Activated CD4-positive, alpha-beta T cell treated with anti-CD3 and anti-CD28 coated beads, Interleukin-2, amount 10 ng/mL, durations not matched to agents 24 days and 14 days (primary cell): ENCODE measurements at regions of chr2 and their contacts with region 1.

Region 1: DNA sequence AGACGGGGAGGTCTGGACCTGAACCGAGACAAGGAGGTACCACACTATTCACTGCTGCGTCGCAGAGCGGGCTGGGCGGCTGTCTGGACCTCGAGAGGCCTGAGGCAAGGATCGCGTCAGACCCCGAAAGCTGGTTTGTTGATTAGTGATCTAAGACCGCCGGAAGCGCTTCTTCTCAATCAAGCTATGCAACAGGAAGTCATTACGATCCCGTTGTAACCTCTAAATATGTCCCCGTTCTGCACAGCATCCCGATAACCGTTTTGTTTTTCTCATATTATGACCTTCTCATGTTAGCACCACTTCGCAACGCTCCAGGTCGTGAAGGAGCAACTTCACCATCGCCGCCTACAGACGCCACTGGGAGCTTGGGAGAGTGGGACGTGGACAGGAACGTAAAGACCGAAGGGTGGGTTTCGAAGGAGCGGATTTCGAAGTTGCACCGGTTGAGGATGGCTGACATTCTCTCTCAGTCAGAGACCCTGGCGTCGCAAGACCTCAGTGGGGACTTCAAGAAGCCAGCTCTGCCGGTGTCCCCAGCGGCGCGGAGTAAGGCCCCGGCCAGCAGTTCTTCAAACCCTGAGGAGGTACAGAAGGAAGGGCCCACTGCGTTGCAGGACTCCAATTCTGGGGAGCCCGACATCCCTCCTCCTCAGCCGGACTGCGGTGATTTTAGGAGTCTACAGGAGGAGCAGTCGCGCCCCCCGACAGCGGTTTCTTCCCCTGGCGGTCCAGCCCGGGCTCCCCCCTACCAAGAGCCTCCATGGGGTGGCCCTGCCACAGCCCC is at the starts of genes SLC4A1AP and SUPT7L:
- DNase-seq: peak; percentile 93
- H3K4me3 Mint-ChIP-seq: peak within 1 kb of the TSS; percentile 98
- H3K27ac Mint-ChIP-seq: peak within 1 kb of the TSS; percentile 99
- H3K4me1 Mint-ChIP-seq: peaks cover 38% of the 10 kb centered on the region
- H3K27me3 Mint-ChIP-seq: no peaks in the 10 kb centered on the region
- total RNA-seq, gene SLC4A1AP: 27.1 and 28.7 TPM in 2 replicates
- total RNA-seq, gene SUPT7L: 33.3 and 34.5 TPM in 2 replicates

Region 2: DNA sequence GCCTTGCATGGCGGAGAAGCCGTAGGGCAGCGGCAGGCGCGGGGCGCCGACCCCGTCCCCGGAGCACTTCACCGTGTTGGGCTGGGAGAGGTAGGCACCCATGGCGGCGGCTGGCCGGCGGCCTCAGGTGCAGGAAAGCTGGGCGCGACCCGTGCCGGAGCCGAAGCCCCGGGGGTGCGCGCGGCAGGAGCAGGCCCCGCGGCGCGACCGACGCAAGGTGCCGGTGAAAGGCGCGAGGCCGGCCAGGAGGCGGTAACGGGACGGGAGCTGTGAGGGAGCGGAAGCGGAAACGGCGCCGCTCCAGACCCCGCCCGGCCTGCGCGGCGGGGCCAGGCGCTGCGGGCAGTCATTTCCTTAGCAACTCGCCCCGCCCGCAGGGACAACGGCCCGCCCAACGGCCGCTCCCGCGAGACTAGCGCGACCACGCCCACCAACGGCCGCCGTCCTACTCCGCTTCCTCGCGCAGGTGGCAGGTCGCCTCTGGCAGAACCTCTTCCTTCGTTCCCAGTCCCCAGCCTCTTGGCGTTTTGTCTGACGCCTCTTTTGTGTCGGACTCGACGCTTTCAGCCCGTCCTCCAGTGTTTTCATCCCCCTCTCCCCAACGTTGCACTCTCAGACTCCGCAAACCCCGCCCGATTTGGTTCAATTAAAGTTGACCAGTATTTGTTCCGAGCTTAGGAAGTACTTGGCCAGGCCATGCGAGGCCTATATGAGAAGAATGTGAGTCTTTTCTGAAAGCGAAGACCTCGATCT is 254.2 kb before region 1 on chr2 and contains the start of gene PPM1G:
- intact Hi-C with region 1: loop called (anchors 10 kb)
- DNase-seq: peak; percentile 99
- H3K4me3 Mint-ChIP-seq: peak within 1 kb of the TSS; percentile 98
- H3K27ac Mint-ChIP-seq: peak within 1 kb of the TSS; percentile 89
- H3K4me1 Mint-ChIP-seq: peaks cover 30% of the 10 kb centered on the region
- H3K27me3 Mint-ChIP-seq: peaks cover 5% of the 10 kb centered on the region
- total RNA-seq, gene PPM1G: 165 and 167 TPM in 2 replicates

Region 3: DNA sequence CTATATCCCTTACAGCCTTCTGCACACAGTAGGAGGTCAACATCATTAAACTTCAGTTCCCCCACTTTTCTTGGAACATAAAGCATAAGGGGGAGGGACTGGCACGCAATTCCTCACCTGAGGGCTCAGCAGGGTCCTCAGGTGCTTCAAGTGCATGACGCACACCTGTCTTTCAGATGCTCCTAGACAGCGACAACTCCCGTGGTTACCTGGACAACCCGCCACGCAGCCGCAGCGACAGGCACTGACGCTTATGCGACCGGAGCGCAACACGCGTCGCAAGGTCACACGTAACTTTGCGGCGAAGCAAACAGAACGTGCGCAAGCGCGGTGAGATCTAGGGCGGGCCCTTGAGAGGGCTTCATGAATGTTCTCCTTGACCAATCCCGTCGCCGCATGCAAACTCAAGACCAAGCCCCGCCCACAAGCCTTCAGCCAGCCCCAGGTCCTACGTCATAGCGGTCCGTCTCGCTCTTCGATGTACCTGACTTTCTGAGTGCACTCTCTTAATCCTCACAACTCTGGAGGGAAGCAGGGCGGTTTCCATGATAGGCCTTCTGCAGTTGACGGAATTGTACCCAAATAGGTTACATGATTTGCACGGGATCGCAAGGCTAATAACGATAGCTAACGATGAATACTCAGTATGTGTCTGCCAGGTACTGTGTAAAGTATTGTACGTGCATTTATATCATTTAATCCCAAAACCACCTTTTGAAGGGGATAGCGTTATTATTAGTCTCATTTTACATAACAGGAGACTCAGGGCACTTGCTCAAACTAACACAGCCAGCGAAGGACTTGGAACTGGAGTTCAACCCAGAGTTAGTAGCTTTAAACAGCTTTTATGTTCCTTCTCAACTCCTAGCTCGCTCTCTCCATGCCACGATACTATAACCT is 173.9 kb before region 1 on chr2 and contains the start of gene IFT172:
- intact Hi-C with region 1: loop called (anchors 10 kb)
- DNase-seq: peak; percentile 100
- H3K4me3 Mint-ChIP-seq: peak within 1 kb of the TSS; percentile 84
- H3K27ac Mint-ChIP-seq: peak within 1 kb of the TSS; percentile 87
- H3K4me1 Mint-ChIP-seq: peaks cover 20% of the 10 kb centered on the region
- H3K27me3 Mint-ChIP-seq: peaks cover 18% of the 10 kb centered on the region
- total RNA-seq, gene IFT172: 12.4 and 12.9 TPM in 2 replicates

Region 4: DNA sequence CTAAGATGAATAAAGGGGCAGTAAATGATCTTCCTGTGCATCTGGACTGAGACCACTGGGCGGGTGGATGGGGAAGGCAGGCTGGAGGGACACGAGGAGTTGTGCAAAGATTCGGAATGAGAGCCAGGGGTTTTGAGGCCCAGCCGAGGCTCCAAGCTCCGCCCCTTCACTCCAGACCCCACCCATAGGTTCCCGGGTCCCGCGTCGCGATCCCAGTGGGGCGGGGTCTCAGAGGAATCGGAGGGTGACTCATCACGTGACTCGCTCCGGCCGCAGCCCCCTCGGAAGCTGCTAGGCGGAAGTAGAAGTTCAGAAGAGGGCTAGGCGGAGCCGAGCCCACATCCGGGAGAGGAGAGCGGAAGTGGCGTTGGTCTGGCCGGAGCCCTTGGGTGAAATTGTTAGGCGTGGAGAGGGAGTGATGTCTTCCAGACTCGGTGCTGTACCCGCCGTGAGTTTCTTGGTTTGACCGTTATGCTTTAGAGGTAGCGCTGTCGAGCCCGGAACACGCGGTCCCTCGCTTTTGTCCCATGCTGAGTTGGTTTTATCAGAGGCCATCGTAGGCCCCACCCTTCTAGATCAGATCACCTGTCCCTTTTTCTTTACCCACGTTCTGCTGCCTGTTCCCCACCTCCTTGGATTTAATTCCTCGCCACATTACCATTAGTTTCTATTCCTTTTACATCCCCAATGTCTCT is 80.8 kb before region 1 on chr2 and contains the start of gene ZNF512:
- intact Hi-C with region 1: loop called (anchors 10 kb)
- DNase-seq: peak; percentile 94
- H3K4me3 Mint-ChIP-seq: peak within 1 kb of the TSS; percentile 92
- H3K27ac Mint-ChIP-seq: peak within 1 kb of the TSS; percentile 88
- H3K4me1 Mint-ChIP-seq: peaks cover 43% of the 10 kb centered on the region
- H3K27me3 Mint-ChIP-seq: peaks cover 3% of the 10 kb centered on the region
- total RNA-seq, gene ZNF512: 29.0 and 32.7 TPM in 2 replicates

Region 5: DNA sequence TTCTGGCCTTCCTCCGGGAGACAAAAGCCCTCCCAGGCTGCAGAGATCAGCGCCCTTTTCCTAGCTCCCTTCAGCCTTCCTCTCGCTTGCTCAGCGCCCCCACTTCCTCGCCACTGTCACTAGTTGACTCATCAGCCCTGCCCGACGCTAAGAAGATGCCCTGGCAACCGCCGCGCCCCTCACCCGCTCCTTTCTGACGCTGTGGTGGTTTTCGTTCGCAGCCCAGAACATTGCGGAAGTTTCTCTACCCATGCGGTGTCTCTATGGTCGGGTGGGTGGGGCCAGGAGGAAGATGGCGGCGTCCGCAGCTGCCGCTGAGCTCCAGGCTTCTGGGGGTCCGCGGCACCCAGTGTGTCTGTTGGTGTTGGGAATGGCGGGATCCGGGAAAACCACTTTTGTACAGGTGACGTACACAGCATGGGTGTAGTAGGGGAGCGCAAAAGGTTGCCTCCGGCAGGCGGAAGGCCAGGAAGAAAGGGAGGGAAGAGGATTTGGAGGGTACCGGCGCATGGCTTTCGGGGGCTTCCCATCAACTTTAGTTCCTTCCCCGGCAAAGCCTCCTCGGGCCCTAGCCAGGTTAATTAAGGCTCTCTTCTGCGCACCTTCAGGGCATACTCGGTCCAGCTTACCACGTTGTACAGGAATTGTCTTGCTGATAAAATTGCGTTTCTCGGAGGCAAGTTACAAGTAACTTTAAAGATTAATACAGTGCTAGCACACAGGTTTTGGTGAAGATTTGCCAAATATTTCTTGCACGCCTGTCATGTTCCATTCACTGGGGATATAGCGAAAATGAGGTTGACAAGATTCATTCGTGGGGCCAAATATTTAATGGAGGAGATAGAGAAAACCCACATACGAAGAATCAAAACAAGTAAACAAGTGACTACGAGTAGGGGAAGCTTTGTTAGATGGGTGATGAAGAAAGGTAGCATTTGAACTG is 34.6 kb before region 1 on chr2 and contains the starts of genes CCDC121 and GPN1:
- intact Hi-C with region 1: loop called (anchors 2 kb)
- DNase-seq: peak; percentile 98
- H3K4me3 Mint-ChIP-seq: no peak within 1 kb of the TSS
- H3K27ac Mint-ChIP-seq: no peak within 1 kb of the TSS
- H3K4me1 Mint-ChIP-seq: peaks cover 25% of the 10 kb centered on the region
- H3K27me3 Mint-ChIP-seq: no peaks in the 10 kb centered on the region
- total RNA-seq, gene CCDC121: 0.54 and 0.63 TPM in 2 replicates
- total RNA-seq, gene GPN1: 51.0 and 55.4 TPM in 2 replicates

Region 6: DNA sequence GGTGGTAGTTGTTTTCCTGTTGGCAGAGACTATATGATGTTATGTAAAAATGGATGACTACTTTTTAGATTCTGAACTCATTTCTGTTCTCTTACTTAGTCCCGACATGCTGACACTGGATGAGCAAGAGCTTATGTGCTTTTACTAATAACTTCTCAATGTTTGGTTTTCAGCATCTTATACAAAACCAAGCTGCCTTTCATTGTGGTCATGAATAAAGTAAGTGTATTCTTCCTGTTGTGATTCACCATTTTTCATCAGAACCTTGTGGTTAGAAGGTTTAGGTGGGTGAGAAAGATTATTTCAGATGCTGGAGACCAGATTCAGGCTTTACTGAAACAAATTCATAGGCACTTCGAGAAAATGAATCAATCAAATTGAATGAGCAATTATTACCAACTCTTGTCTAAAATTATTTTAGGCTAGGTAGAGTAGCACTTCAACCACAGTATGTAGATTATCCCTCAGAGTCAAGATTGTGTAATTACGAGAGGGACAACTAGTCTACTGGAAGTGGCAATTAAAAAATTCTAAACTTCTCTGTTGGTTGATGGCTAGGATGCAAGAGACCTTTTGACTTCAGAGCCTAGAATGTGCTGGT is 25.5 kb before region 1 on chr2:
- intact Hi-C with region 1: loop called (anchors 2 kb)
- DNase-seq: peak; percentile 64
- H3K4me3 Mint-ChIP-seq: peak overlapping the region; percentile 72
- H3K27ac Mint-ChIP-seq: peak overlapping the region; percentile 93
- H3K4me1 Mint-ChIP-seq: peaks cover 19% of the 10 kb centered on the region
- H3K27me3 Mint-ChIP-seq: no peaks in the 10 kb centered on the region

Region 7: DNA sequence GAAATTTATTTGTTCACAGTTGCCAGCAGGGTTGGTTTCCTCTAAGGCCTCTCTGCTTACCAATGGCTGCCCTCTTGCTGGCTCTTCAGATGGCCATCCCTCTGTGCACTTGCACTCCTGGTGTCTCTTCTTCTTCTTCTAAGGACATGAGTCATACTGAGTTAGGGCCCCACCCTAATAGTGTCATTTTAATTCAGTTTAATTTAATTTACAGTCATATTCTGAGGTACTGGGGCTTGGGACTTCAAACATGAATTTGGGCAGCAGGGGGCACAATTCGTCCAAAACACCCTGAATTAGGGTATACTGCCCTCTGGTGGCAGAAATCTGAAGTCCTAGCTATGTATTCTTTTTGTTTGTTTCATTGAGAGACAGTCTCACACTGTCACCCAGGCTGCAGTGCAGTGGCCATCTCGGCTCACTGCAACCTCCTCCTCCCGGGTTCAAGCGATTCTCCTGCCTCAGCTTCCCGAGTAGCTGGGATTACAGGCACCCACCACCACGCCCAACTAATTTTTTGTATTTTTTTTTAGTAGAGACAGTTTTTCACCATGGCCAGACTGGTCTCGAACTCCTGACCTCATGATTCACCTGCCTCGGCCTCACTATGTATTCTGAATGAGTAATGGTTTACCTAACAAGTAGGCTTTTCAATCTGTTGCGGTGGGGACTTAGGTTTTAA is 19.9 kb after region 1 on chr2:
- intact Hi-C with region 1: loop called (anchors 2 kb)
- DNase-seq: peak; percentile 97
- H3K4me3 Mint-ChIP-seq: no peak overlapping the region
- H3K27ac Mint-ChIP-seq: peak overlapping the region; percentile 79
- H3K4me1 Mint-ChIP-seq: peaks cover 26% of the 10 kb centered on the region
- H3K27me3 Mint-ChIP-seq: no peaks in the 10 kb centered on the region